Caco-2 (cell line): ENCODE measurements at regions of chr10 and their contacts with region 1.

Region 1: DNA sequence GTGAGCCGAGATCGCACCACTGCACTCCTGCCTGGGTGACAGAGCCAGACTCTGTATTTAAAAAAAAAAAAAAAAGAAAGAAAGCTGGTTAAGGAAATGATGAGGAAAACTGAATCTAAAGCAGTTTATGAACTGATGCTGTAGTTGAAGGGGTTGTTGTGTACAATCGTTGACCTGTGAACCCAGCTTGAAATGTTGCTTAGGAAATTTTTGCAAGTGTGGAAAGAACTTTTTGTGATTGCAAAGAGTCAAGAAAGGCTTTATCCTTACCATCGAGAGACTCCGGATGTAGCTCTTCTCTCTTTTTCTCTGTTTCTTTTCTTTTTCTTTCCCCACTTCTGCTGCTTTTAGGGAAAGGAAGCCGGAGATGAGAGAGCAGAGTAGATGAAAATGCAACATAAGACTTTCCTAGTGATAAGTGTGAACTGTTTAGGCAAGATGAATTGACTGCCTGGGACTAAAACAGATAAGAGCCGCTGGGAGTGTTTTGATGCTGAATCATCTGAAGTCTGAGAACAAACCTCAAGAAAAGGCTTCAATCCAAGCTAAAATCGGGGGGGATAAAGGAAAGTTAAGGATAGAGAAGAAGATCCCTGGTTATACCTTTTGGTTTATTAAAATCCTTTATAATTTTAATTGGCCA is 69.0 kb downstream of the TAF3 start:
- DNase-seq: no peak
- H3K4me3 ChIP-seq: no peak overlapping the region
- H3K4me3 Mint-ChIP-seq: no peak overlapping the region
- H3K27ac Mint-ChIP-seq: peak overlapping the region; percentile 58
- H3K4me1 ChIP-seq: peaks cover 22% of the 10 kb centered on the region
- H3K4me1 Mint-ChIP-seq: peaks cover 36% of the 10 kb centered on the region
- H3K27me3 ChIP-seq: no peaks in the 10 kb centered on the region
- H3K27me3 Mint-ChIP-seq: no peaks in the 10 kb centered on the region
- CTCF ChIP-seq: no peak

Region 2: DNA sequence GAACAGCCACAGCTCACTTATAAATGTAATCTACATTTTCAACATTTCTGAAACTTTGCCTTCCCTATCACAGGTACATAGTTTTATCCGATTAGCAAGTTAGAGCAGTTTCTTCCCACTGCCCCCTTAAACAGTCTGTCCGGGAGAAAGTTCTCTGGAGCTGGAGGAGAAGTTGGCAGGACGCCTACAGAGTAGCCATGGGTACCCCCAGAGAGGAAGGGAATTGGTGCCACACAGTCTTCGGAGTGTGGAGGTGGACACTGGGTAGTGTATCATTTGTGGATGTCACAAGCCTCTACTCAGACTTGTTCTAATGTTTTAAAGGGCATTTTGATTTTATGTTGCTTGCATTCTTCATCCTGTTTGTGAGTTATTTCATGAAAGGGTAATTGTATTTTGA is 30.0 kb before region 1 on chr10:
- CTCF ChIA-PET with region 1: no interaction called
- POLR2A ChIA-PET with region 1: no interaction called
- intact Hi-C with region 1: no loop called
- DNase-seq: peak in 1 of 2 experiments; percentile 24
- H3K4me3 ChIP-seq: no peak overlapping the region
- H3K4me3 Mint-ChIP-seq: peak overlapping the region; percentile 60
- H3K27ac Mint-ChIP-seq: peak overlapping the region; percentile 81
- H3K4me1 ChIP-seq: peaks cover 62% of the 10 kb centered on the region
- H3K4me1 Mint-ChIP-seq: peaks cover 49% of the 10 kb centered on the region
- H3K27me3 ChIP-seq: no peaks in the 10 kb centered on the region
- H3K27me3 Mint-ChIP-seq: no peaks in the 10 kb centered on the region
- CTCF ChIP-seq: no peak

Region 3: GRCh38 chr10:7915923-7916536 is 28.7 kb after region 1 on chr10:
- CTCF ChIA-PET with region 1: no interaction called
- POLR2A ChIA-PET with region 1: no interaction called
- intact Hi-C with region 1: no loop called
- DNase-seq: no peak
- H3K4me3 ChIP-seq: no peak overlapping the region
- H3K4me3 Mint-ChIP-seq: no peak overlapping the region
- H3K27ac Mint-ChIP-seq: no peak overlapping the region
- H3K4me1 ChIP-seq: 0 out of 2 replicates have a peak, but pooled peaks cover under 1% of the 10 kb centered on the region
- H3K4me1 Mint-ChIP-seq: no peaks in the 10 kb centered on the region
- H3K27me3 ChIP-seq: no peaks in the 10 kb centered on the region
- H3K27me3 Mint-ChIP-seq: no peaks in the 10 kb centered on the region
- CTCF ChIP-seq: no peak

Region 4: DNA sequence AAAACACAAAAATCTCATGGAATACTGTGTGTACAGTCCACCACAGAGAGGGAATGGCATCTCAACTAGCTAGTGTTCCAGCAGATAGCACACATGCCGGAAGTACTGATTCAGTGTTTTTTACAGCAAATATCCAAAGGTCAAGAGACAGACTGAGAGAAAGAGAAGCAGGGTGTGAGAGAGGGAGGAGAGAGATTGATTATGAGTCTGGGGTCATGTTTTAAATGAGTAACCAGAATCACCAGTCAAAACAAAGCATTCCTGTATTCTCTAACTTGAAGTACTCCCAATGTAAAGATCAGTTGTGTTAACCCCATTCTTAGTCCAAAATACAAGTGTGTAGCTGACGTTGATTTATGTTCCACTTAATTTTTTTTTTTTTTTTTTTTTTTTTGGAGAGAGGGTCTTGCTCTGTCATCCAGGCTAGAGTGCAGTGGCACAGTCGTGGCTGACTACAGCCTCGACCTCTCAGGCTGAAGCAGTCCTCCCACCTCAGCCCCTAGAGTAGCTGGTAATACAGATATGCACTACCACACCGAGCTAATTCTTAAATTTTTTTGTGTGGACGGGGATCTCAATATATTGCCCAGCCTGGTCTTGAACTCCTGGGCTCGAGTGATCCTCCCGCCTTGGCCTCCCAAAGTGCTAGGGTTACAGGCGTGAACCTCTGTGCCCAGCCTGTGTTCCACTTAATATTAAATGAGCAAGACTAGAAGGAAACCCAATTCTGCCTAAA is 45.2 kb after region 1 on chr10:
- CTCF ChIA-PET with region 1: no interaction called
- POLR2A ChIA-PET with region 1: interaction called, 4 read pairs
- intact Hi-C with region 1: loop called (anchors 2 kb)
- DNase-seq: peak; percentile 61 to 66
- H3K4me3 ChIP-seq: peak overlapping the region; percentile 10; the same call in 1 of the 2 replicates
- H3K4me3 Mint-ChIP-seq: peak overlapping the region; percentile 49
- H3K27ac Mint-ChIP-seq: peak overlapping the region; percentile 48
- H3K4me1 ChIP-seq: peaks cover 31% of the 10 kb centered on the region
- H3K4me1 Mint-ChIP-seq: peaks cover 45% of the 10 kb centered on the region
- H3K27me3 ChIP-seq: no peaks in the 10 kb centered on the region
- H3K27me3 Mint-ChIP-seq: no peaks in the 10 kb centered on the region
- CTCF ChIP-seq: no peak

Region 5: GRCh38 chr10:8026346-8027240 is 139.3 kb after region 1 on chr10:
- CTCF ChIA-PET with region 1: interaction called, 3 read pairs
- POLR2A ChIA-PET with region 1: no interaction called
- intact Hi-C with region 1: loop called (anchors 5 kb)
- DNase-seq: peak in 1 of 2 experiments; percentile 53
- H3K4me3 ChIP-seq: peak overlapping the region; percentile 1
- H3K4me3 Mint-ChIP-seq: peak overlapping the region; percentile 68
- H3K27ac Mint-ChIP-seq: peak overlapping the region; percentile 32
- H3K4me1 ChIP-seq: peaks cover 23% of the 10 kb centered on the region
- H3K4me1 Mint-ChIP-seq: peaks cover 14% of the 10 kb centered on the region
- H3K27me3 ChIP-seq: no peaks in the 10 kb centered on the region
- H3K27me3 Mint-ChIP-seq: peaks cover under 1% of the 10 kb centered on the region
- CTCF ChIP-seq: no peak

Region 6: DNA sequence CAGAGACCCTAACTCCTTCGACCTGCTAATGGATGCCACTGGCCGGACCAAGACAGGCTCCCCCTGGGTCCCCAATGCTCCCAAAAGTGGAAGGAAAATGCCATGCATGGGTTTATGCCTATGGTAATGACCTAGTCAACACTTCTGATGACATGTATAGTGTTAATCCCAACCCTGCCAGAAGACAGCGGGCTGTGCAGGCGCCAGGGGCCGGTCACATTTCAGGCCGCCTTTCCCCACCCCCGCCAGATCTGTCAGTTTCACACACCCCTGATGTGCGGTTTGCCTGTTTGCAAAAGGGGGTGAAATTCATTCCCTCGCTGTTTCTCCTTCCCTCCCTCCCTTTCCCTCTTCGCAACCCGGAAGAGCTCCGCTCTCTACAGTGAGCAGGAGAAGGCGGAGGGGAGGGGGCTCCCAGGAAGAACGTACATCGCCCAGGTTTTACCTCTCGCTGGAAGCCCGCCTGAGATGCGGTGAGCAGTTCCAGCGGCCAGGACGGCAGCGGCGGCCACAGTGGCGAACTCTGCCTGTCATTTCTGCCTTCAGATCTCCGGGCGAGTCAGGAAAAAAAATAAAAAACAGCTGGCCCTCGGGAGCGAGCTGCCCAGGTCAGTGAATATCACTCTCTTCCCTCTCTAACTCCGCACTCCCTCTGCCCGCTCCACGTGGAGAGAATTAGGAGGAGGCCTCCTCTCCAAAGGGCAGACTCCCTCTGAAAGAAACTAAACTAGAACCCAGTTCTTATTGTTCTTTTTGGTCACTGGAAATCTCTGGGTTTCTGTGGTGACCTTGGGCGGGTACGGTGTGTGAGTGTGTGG is 157.8 kb after region 1 on chr10:
- CTCF ChIA-PET with region 1: no interaction called
- POLR2A ChIA-PET with region 1: no interaction called
- intact Hi-C with region 1: loop called (anchors 5 kb)
- DNase-seq: peak; percentile 71 to 74
- H3K4me3 ChIP-seq: peak overlapping the region; percentile 43
- H3K4me3 Mint-ChIP-seq: peak overlapping the region; percentile 76
- H3K27ac Mint-ChIP-seq: peak overlapping the region; percentile 65
- H3K4me1 ChIP-seq: peaks cover 24% of the 10 kb centered on the region
- H3K4me1 Mint-ChIP-seq: peaks cover 28% of the 10 kb centered on the region
- H3K27me3 ChIP-seq: no peaks in the 10 kb centered on the region
- H3K27me3 Mint-ChIP-seq: no peaks in the 10 kb centered on the region
- CTCF ChIP-seq: no peak